PC-3 (cell line): ENCODE measurements at regions of chr3 and their contacts with region 1.

Region 1: GRCh38 chr3:149224736-149225594 is 3.3 kb upstream of the CP start:
- DNase-seq: peak; percentile 73
- ATAC-seq: peak; percentile 81
- H3K4me3 ChIP-seq: peak overlapping the region; percentile 73
- H3K27ac ChIP-seq: peak overlapping the region; percentile 38
- H3K4me1 ChIP-seq: peaks cover 11% of the 10 kb centered on the region
- H3K27me3 ChIP-seq: no peaks in the 10 kb centered on the region
- CTCF ChIP-seq: no peak

Region 2: DNA sequence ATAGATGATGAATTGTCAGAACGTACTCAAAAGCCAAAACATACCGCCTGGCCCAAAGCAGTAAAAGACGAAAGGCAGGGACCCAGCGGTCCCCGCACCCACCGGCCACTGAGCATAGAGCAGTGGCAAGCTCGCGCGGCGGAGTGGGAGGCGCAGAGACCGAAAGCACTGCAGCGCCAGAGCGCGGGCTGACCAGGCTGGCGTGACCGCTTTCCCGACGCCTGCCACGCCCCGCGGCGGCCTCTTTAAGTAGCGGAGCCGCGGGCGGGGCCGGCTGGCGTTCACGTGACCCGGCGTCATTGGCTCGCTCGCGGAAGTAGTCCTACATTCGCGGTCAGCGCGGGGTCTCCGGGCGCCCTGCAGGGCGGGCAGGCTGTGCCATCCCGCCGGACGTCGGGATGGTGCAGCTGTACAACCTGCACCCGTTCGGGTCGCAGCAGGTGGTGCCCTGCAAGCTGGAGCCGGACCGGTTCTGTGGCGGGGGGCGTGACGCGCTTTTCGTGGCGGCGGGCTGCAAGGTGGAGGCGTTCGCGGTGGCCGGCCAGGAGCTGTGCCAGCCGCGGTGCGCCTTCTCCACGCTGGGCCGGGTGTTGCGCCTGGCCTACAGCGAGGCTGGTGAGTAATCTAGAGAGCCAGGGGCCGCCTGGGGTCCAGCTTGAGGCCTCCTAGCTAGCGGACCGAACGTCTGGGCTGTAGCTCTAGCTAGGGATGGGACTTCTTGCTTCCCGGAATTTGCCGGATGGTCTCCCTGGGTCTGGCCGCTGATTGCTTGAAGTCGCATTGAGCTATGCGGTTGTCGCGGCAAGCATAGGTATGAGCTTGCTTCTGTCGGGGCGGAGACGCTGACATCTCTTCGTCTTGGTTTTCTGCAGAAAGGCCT is 95.4 kb before region 1 on chr3 and contains the start of gene HPS3:
- CTCF ChIA-PET with region 1: no interaction called
- POLR2A ChIA-PET with region 1: no interaction called
- intact Hi-C with region 1: loop called (anchors 5 kb)
- DNase-seq: peak; percentile 95
- ATAC-seq: peak; percentile 90
- H3K4me3 ChIP-seq: peak within 1 kb of the TSS; percentile 78
- H3K27ac ChIP-seq: peak within 1 kb of the TSS; percentile 65
- H3K4me1 ChIP-seq: peaks cover 38% of the 10 kb centered on the region
- H3K27me3 ChIP-seq: no peaks in the 10 kb centered on the region
- CTCF ChIP-seq: no peak
- total RNA-seq, gene HPS3: 11.3 and 13.9 TPM in 2 replicates

Region 3: GRCh38 chr3:149203758-149204157 is 21.2 kb before region 1 on chr3:
- CTCF ChIA-PET with region 1: no interaction called
- POLR2A ChIA-PET with region 1: no interaction called
- intact Hi-C with region 1: loop called (anchors 2 kb)
- DNase-seq: no peak
- ATAC-seq: no peak
- H3K4me3 ChIP-seq: no peak overlapping the region
- H3K27ac ChIP-seq: no peak overlapping the region
- H3K4me1 ChIP-seq: peaks cover 4% of the 10 kb centered on the region
- H3K27me3 ChIP-seq: no peaks in the 10 kb centered on the region
- CTCF ChIP-seq: no peak